GM12878 (cell line): ENCODE measurements at regions of chr15 and their contacts with region 1.

Region 1: GRCh38 chr15:61871926-61872522 is 188.2 kb downstream of the VPS13C start:
- DNase-seq: no peak
- ATAC-seq: peak; percentile 61
- H3K4me3 ChIP-seq: no peak overlapping the region
- H3K27ac ChIP-seq: no peak overlapping the region
- H3K4me1 ChIP-seq: no peaks in the 10 kb centered on the region
- H3K27me3 ChIP-seq: no peaks in the 10 kb centered on the region
- CTCF ChIP-seq: peak; percentile 23 to 54 (median 43); a peak in 3 of 6 replicates
- EP300 ChIP-seq: no peak
- POLR2A ChIP-seq: no peak
- RAD21 ChIP-seq: peak; percentile 43; the same call in 1 of the 2 replicates

Region 2: GRCh38 chr15:61857169-61857829 is 14.7 kb before region 1 on chr15:
- CTCF ChIA-PET with region 1: interaction called, 10 read pairs
- POLR2A ChIA-PET with region 1: no interaction called
- RAD21 ChIA-PET with region 1: no interaction called
- SMC1A ChIA-PET with region 1: interaction called, 3 read pairs
- in situ Hi-C with region 1: no loop called
- intact Hi-C with region 1: no loop called
- DNase-seq: no peak
- ATAC-seq: peak; percentile 75
- H3K4me3 ChIP-seq: no peak overlapping the region
- H3K27ac ChIP-seq: peak overlapping the region; percentile 40
- H3K4me1 ChIP-seq: peaks cover 7% of the 10 kb centered on the region
- H3K27me3 ChIP-seq: no peaks in the 10 kb centered on the region
- CTCF ChIP-seq: no peak
- EP300 ChIP-seq: no peak
- POLR2A ChIP-seq: no peak
- RAD21 ChIP-seq: no peak

Region 3: DNA sequence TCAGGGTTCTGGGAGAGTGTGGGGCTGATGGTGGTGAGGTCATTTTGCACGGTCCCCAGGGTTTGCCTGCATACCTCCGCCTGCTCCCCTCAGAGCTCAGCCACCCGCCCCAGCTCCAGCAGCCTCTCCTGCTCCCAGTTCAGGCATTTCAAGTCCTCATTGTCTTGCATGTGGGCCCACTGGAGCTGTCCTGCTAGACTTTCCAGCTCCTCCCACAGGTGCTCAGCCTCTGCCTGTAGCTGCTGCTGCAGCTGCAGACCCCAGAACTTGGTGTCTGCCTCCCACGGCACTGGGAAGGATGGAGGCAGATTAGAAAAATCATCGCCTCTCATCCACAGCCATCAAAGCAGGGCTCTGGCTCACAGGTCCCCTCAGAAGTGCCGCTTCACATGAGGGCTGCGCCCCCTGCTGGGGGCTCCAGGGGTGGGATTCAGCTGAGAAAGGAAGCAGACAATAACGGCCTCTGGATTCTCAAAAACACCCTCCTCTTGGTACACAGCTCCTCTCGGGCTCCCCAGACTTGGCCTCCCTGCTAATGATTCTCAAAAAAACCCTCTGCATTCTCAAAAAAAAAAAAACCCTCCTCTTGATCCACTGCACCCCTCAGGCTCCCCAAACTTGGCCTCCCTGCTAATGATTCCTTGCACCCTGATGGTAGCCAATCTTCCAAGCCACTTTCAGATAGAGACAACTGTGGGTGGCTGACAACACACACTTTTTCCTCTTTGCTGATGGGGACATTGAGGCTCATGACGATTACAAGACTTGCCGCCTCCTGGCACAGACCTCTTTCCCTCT is 382.3 kb after region 1 on chr15:
- CTCF ChIA-PET with region 1: interaction called, 4 read pairs
- POLR2A ChIA-PET with region 1: no interaction called
- RAD21 ChIA-PET with region 1: interaction called, 4 read pairs
- SMC1A ChIA-PET with region 1: no interaction called
- in situ Hi-C with region 1: no loop called
- intact Hi-C with region 1: loop called (anchors 5 kb)
- DNase-seq: no peak
- ATAC-seq: peak; percentile 83
- H3K4me3 ChIP-seq: no peak overlapping the region
- H3K27ac ChIP-seq: no peak overlapping the region
- H3K4me1 ChIP-seq: no peaks in the 10 kb centered on the region
- H3K27me3 ChIP-seq: no peaks in the 10 kb centered on the region; a peak in 1 of 4 replicates
- CTCF ChIP-seq: peak; percentile 48 to 73 (median 58)
- EP300 ChIP-seq: no peak
- POLR2A ChIP-seq: no peak
- RAD21 ChIP-seq: peak; percentile 47